WTC11 (cell line): ENCODE measurements at regions of chr12 and their contacts with region 1.

Region 1: DNA sequence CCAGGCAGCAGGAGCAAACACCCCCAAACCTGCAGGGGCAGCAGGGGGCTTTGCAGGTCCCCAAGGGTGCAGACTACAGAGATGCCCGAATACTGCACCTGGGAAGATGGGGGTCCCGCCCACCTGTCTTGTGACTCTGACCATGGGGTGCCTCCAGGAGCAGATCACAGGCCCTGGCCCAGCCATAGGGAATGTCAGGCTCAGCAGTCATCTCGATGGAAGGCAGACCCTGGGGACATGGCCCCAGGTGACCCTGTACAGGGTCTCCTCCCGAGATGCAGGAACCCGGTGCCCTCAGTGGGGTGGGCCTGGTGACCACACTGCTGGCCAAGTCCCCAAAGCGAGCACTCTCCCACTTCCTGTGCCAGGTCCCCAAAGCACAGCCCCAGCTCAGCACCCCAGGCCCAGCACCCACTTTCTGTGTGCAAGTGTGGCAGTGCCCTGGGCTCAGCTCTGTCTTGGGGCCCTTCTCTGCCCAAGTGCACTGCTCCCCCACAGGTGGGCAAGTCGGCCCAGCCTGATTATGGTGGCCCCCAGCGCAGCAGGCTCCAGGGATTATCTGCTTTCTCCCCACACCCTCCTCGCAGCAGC is 903.7 kb upstream of the USP15 start:
- DNase-seq: no peak
- ATAC-seq: no peak
- H3K4me3 Mint-ChIP-seq: no peak overlapping the region
- H3K27ac Mint-ChIP-seq: no peak overlapping the region
- H3K4me1 Mint-ChIP-seq: no peaks in the 10 kb centered on the region
- H3K27me3 Mint-ChIP-seq: no peaks in the 10 kb centered on the region
- CTCF ChIP-seq: no peak

Region 2: DNA sequence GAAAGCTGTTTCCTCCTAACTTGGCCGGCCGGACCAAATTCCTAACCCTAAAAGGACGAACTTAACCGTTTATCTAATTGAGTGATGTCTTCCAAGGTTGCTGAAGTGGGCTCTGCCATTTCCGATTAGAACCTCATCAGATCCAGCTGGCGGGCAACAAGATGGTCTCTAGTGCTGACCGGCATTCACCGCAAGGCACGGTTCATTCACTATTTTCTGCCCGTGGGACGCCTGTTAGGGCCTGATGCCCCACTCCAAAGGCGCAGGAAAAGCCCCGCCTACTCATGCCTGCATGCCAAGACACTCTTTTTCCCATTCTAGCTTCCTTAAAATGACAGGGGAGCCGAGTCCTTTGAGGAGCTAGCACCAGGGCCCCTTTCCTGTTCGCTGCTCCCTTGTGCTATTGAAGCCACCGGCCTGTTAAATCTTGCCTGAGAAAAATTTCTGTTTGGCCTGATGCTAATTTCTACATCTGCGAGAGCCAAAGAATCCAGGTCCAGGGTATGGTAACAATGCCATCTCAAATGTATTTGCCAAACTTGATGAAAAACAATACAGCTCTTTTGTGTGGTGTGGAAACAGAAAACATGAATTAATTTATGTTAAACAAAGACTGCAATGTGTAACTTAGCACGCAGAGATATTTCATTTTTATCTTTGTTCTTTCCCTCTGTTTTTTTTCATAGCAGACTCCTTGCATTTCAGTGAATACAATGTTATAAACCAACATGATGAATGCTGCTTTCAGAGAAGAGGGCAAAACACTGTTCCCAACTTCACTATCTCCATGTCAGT is 167.5 kb before region 1 on chr12:
- CTCF ChIA-PET with region 1: no interaction called
- POLR2A ChIA-PET with region 1: interaction called, 15 read pairs
- DNase-seq: no peak
- ATAC-seq: no peak
- H3K4me3 Mint-ChIP-seq: no peak overlapping the region
- H3K27ac Mint-ChIP-seq: no peak overlapping the region
- H3K4me1 Mint-ChIP-seq: no peaks in the 10 kb centered on the region
- H3K27me3 Mint-ChIP-seq: no peaks in the 10 kb centered on the region
- CTCF ChIP-seq: no peak

Region 3: DNA sequence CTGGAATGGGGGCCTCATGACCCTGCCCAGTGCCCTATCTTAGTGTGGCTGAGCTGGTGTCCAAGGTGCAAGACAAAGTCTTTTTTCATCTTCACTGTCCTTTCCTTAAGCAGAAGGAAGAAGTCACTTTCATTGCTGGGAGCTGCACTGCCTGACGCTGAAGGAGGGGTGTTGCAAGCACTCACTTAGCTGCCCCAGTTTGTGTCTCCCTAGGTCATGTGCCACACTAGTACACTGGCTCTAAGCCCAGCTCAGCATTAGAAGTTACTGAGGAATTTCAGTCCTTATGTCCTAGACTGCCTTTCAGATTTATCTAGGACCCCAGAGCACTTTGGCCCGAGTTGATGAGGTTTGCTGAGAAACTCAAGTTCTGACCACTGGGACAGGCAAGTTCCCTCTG is 48.3 kb before region 1 on chr12:
- CTCF ChIA-PET with region 1: no interaction called
- POLR2A ChIA-PET with region 1: no interaction called
- DNase-seq: no peak
- ATAC-seq: no peak
- H3K4me3 Mint-ChIP-seq: no peak overlapping the region
- H3K27ac Mint-ChIP-seq: no peak overlapping the region
- H3K4me1 Mint-ChIP-seq: no peaks in the 10 kb centered on the region
- H3K27me3 Mint-ChIP-seq: no peaks in the 10 kb centered on the region
- CTCF ChIP-seq: no peak

Region 4: GRCh38 chr12:61385771-61386170 is 29.2 kb after region 1 on chr12:
- CTCF ChIA-PET with region 1: no interaction called
- POLR2A ChIA-PET with region 1: no interaction called
- DNase-seq: no peak
- ATAC-seq: no peak
- H3K4me3 Mint-ChIP-seq: no peak overlapping the region
- H3K27ac Mint-ChIP-seq: no peak overlapping the region
- H3K4me1 Mint-ChIP-seq: no peaks in the 10 kb centered on the region
- H3K27me3 Mint-ChIP-seq: peaks cover 15% of the 10 kb centered on the region
- CTCF ChIP-seq: no peak

Region 5: DNA sequence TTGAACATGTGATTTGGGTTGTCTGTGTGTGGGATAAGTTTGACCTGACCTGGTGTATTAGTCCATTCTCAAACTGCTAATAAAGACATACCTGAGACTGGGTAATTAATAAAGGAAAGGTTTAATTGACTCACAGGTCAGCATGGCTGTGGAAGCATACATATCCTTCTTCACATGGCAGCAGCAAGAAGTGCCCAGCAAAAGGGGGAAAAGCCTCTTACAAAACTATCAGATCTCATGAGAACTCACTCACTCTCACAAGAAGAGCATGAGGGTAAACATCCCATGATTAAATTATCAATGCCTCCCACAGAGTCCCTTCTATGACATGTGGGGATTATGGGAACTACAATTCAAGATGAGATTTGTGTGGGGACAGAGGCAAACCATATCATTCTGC is 1672.4 kb after region 1 on chr12:
- CTCF ChIA-PET with region 1: no interaction called
- POLR2A ChIA-PET with region 1: interaction called, 10 read pairs
- DNase-seq: no peak
- ATAC-seq: no peak
- H3K4me3 Mint-ChIP-seq: no peak overlapping the region
- H3K27ac Mint-ChIP-seq: no peak overlapping the region
- H3K4me1 Mint-ChIP-seq: peaks cover 37% of the 10 kb centered on the region
- H3K27me3 Mint-ChIP-seq: no peaks in the 10 kb centered on the region; the same call in 1 of the 2 replicates
- CTCF ChIP-seq: no peak